HCT116 (cell line): ENCODE measurements at regions of chr4 and their contacts with region 1.

Region 1: GRCh38 chr4:146191766-146192458 is 16.4 kb downstream of the LSM6 start:
- DNase-seq: no peak
- ATAC-seq: peak; percentile 78
- H3K4me3 ChIP-seq: no peak overlapping the region
- H3K27ac ChIP-seq: no peak overlapping the region
- H3K4me1 ChIP-seq: peaks cover 0 to 6% of the 10 kb centered on the region in 2 experiments; a peak in 1 of 4 replicates
- H3K27me3 ChIP-seq: no peaks in the 10 kb centered on the region
- CTCF ChIP-seq: peak in 2 of 3 experiments; percentile 9 to 29; a peak in 2 of 6 replicates
- POLR2A ChIP-seq: no peak
- RAD21 ChIP-seq: no peak

Region 2: GRCh38 chr4:146175541-146176453 is 16.1 kb before region 1 on chr4 and contains the start of gene LSM6:
- CTCF ChIA-PET with region 1: no interaction called
- POLR2A ChIA-PET with region 1: no interaction called
- RAD21 ChIA-PET with region 1: no interaction called
- intact Hi-C with region 1: loop called (anchors 1 kb)
- DNase-seq: peak; percentile 67
- ATAC-seq: peak; percentile 92
- H3K4me3 ChIP-seq: peak within 1 kb of the TSS; percentile 86 to 89
- H3K27ac ChIP-seq: peak within 1 kb of the TSS; percentile 79
- H3K4me1 ChIP-seq: peaks cover 3 to 17% of the 10 kb centered on the region in 2 experiments; a peak in 3 of 4 replicates
- H3K27me3 ChIP-seq: no peaks in the 10 kb centered on the region
- CTCF ChIP-seq: no peak
- POLR2A ChIP-seq: no peak
- RAD21 ChIP-seq: 0 out of 2 replicates have a peak, but pooled peaks have one; percentile 2
- total RNA-seq, gene LSM6: 57.4 TPM

Region 3: DNA sequence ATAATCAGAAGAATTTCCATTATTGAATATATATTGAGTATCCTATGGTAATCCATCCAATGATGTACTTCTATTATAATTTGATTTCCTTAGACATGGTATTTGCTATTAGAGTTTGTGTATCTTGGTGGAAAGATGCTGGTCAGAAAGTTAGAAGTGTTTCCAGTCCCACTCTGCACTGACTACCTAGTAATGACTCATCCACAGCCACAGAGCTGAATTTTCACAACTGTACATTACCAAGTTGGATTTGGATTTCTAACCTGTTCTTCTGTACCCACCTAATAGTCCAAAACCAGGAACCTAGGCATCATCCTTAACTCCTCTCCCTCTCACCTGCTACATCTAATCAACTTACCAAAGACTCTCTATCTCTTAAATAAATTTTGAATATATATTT is 167.9 kb after region 1 on chr4:
- CTCF ChIA-PET with region 1: no interaction called
- POLR2A ChIA-PET with region 1: no interaction called
- RAD21 ChIA-PET with region 1: no interaction called
- intact Hi-C with region 1: no loop called
- DNase-seq: no peak
- ATAC-seq: no peak
- H3K4me3 ChIP-seq: no peak overlapping the region
- H3K27ac ChIP-seq: no peak overlapping the region
- H3K4me1 ChIP-seq: no peaks in the 10 kb centered on the region
- H3K27me3 ChIP-seq: no peaks in the 10 kb centered on the region
- CTCF ChIP-seq: no peak
- POLR2A ChIP-seq: no peak
- RAD21 ChIP-seq: no peak